GM13976 (cell line): ENCODE measurements at regions of chr21 and their contacts with region 1.

Region 1: GRCh38 chr21:25039461-25040380 is 567.6 kb downstream of the MRPL39 start:
- DNase-seq: no peak
- CTCF ChIP-seq: peak; percentile 31

Region 2: DNA sequence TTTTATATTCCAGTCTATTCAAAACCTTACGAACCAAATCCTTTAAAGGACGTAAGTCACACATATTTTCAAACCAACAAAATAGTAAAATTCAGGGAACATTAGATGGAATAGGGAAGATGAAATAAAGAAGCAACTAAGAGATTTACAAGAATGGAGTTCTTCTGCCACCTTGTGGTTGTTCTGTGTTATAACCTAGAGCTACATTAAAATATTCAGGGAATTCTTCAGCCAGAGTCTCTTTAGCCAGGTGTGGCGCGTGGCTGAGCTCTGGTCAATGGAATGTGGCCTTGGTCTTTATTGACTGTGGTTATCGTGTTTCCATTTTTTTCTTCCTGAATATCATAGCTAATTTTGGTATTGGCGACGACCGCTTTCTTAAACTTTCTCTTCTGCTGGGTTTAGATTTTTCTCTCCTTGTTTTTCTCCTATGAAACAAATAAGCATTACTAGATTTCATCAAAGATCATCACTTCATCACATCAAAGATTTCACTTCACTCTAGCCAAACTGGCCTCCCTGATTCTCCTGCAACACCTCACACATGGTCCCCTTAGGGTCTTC is 346.3 kb after region 1 on chr21:
- in situ Hi-C with region 1: loop called (anchors 10 kb)
- DNase-seq: peak; percentile 38
- CTCF ChIP-seq: peak; percentile 60